Left cardiac atrium (tissue), 4 donors: ENCODE measurements at regions of chr11 and their contacts with region 1.

Region 1: GRCh38 chr11:12159351-12160099 is 49.1 kb downstream of the MICAL2 start:
- DNase-seq: no peak
- ATAC-seq: peak; percentile 39 to 74

Region 2: GRCh38 chr11:12122083-12122482 is 37.4 kb before region 1 on chr11:
- intact Hi-C with region 1: loop called in 1 of 2 experiments (anchors 5 kb)
- DNase-seq: no peak
- ATAC-seq: no peak

Region 3: DNA sequence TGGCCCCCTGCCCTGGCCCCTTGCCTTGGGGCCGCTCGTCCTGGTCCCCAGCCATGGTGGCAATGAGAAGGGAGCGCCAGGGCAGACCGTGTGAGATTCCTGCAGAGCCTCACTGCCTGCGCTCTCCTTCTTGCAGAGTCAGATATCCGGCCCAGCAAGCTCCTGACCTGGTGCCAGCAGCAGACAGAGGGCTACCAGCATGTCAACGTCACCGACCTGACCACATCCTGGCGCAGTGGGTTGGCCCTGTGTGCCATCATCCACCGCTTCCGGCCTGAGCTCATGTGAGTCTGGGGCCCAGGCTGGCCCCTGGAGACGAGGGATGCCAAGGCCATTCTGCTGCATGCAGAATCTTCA is 65.0 kb after region 1 on chr11:
- intact Hi-C with region 1: loop called in 1 of 2 experiments (anchors 10 kb)
- DNase-seq: peak; percentile 86
- ATAC-seq: peak; percentile 65 to 68